MCF 10A (cell line): ENCODE measurements at regions of chr5 and their contacts with region 1.

Region 1: GRCh38 chr5:112995764-112996618 is 19.4 kb downstream of the DCP2 start:
- DNase-seq: peak; percentile 79
- H3K4me3 Mint-ChIP-seq: no peak overlapping the region
- H3K27ac Mint-ChIP-seq: no peak overlapping the region
- H3K4me1 Mint-ChIP-seq: peaks cover 10% of the 10 kb centered on the region
- H3K27me3 Mint-ChIP-seq: no peaks in the 10 kb centered on the region
- CTCF ChIP-seq: peak; percentile 92

Region 2: GRCh38 chr5:112860929-112861637 is 134.9 kb before region 1 on chr5 and contains the start of gene SRP19:
- CTCF ChIA-PET with region 1: no interaction called
- POLR2A ChIA-PET with region 1: no interaction called
- intact Hi-C with region 1: no loop called
- DNase-seq: peak; percentile 98
- H3K4me3 Mint-ChIP-seq: peak within 1 kb of the TSS; percentile 88
- H3K27ac Mint-ChIP-seq: peak within 1 kb of the TSS; percentile 94
- H3K4me1 Mint-ChIP-seq: peaks cover 13% of the 10 kb centered on the region
- H3K27me3 Mint-ChIP-seq: peaks cover 24% of the 10 kb centered on the region
- CTCF ChIP-seq: no peak
- total RNA-seq, gene SRP19: 88.9 and 99.6 TPM in 2 replicates

Region 3: GRCh38 chr5:112976432-112977309 is 19.3 kb before region 1 on chr5 and contains the start of gene DCP2:
- CTCF ChIA-PET with region 1: interaction called, 11 read pairs
- POLR2A ChIA-PET with region 1: interaction called, 5 read pairs
- intact Hi-C with region 1: no loop called
- DNase-seq: peak; percentile 99
- H3K4me3 Mint-ChIP-seq: peak within 1 kb of the TSS; percentile 97
- H3K27ac Mint-ChIP-seq: peak within 1 kb of the TSS; percentile 98
- H3K4me1 Mint-ChIP-seq: peaks cover 15% of the 10 kb centered on the region
- H3K27me3 Mint-ChIP-seq: no peaks in the 10 kb centered on the region
- CTCF ChIP-seq: no peak
- total RNA-seq, gene DCP2: 32.7 and 34.1 TPM in 2 replicates

Region 4: GRCh38 chr5:113043491-113043931 is 47.5 kb after region 1 on chr5:
- CTCF ChIA-PET with region 1: interaction called, 4 read pairs
- POLR2A ChIA-PET with region 1: no interaction called
- intact Hi-C with region 1: loop called (anchors 2 kb)
- DNase-seq: no peak
- H3K4me3 Mint-ChIP-seq: no peak overlapping the region
- H3K27ac Mint-ChIP-seq: no peak overlapping the region
- H3K4me1 Mint-ChIP-seq: peaks cover 16% of the 10 kb centered on the region
- H3K27me3 Mint-ChIP-seq: no peaks in the 10 kb centered on the region
- CTCF ChIP-seq: no peak

Region 5: GRCh38 chr5:113294311-113295110 is 298.5 kb after region 1 on chr5:
- CTCF ChIA-PET with region 1: interaction called, 7 read pairs
- POLR2A ChIA-PET with region 1: no interaction called
- intact Hi-C with region 1: loop called (anchors 1 kb)
- DNase-seq: peak; percentile 83
- H3K4me3 Mint-ChIP-seq: peak overlapping the region; percentile 82
- H3K27ac Mint-ChIP-seq: peak overlapping the region; percentile 54
- H3K4me1 Mint-ChIP-seq: peaks cover 13% of the 10 kb centered on the region
- H3K27me3 Mint-ChIP-seq: no peaks in the 10 kb centered on the region
- CTCF ChIP-seq: no peak

Region 6: DNA sequence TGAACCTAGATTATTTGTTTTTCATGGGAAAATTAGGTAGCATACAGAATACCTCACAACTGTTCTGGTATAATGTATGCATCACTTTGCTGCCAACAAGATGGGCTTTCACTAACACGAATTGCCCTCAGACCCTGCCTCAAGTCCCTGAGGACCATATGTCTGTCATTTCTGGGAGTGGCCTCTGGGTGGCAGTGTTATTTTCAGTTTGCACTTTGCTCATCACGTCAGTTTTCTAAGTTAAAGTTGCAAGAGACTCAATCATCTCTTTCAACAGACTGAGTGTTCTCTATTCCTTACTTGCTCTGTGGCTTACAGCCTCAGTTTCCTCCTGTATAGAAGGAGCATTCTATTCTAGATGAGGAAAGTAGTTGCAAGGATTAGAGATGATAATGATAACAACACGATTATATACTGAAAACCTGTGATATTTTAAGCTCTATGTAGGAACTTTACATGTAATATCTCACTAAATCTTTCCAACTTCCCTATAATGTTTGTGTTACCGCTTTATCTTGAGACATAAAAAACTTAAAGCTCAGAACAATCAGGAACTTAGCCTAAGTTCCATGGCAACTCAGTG is 383.1 kb after region 1 on chr5:
- CTCF ChIA-PET with region 1: interaction called, 20 read pairs
- POLR2A ChIA-PET with region 1: no interaction called
- intact Hi-C with region 1: loop called (anchors 1 kb)
- DNase-seq: peak; percentile 73
- H3K4me3 Mint-ChIP-seq: no peak overlapping the region
- H3K27ac Mint-ChIP-seq: no peak overlapping the region
- H3K4me1 Mint-ChIP-seq: peaks cover 12% of the 10 kb centered on the region
- H3K27me3 Mint-ChIP-seq: no peaks in the 10 kb centered on the region
- CTCF ChIP-seq: peak; percentile 66

Region 7: GRCh38 chr5:113507601-113508000 is 511.6 kb after region 1 on chr5:
- CTCF ChIA-PET with region 1: interaction called, 73 read pairs
- POLR2A ChIA-PET with region 1: interaction called, 13 read pairs
- intact Hi-C with region 1: loop called (anchors 1 kb)
- DNase-seq: no peak
- H3K4me3 Mint-ChIP-seq: no peak overlapping the region
- H3K27ac Mint-ChIP-seq: no peak overlapping the region
- H3K4me1 Mint-ChIP-seq: peaks cover 16% of the 10 kb centered on the region
- H3K27me3 Mint-ChIP-seq: no peaks in the 10 kb centered on the region
- CTCF ChIP-seq: no peak

Region 8: GRCh38 chr5:113606298-113607134 is 610.5 kb after region 1 on chr5:
- CTCF ChIA-PET with region 1: interaction called, 19 read pairs
- POLR2A ChIA-PET with region 1: no interaction called
- intact Hi-C with region 1: loop called (anchors 5 kb)
- DNase-seq: peak; percentile 70
- H3K4me3 Mint-ChIP-seq: no peak overlapping the region
- H3K27ac Mint-ChIP-seq: no peak overlapping the region
- H3K4me1 Mint-ChIP-seq: no peaks in the 10 kb centered on the region
- H3K27me3 Mint-ChIP-seq: no peaks in the 10 kb centered on the region
- CTCF ChIP-seq: peak; percentile 91